Mammary epithelial cell (primary cell): ENCODE measurements at regions of chr10 and their contacts with region 1.

Region 1: DNA sequence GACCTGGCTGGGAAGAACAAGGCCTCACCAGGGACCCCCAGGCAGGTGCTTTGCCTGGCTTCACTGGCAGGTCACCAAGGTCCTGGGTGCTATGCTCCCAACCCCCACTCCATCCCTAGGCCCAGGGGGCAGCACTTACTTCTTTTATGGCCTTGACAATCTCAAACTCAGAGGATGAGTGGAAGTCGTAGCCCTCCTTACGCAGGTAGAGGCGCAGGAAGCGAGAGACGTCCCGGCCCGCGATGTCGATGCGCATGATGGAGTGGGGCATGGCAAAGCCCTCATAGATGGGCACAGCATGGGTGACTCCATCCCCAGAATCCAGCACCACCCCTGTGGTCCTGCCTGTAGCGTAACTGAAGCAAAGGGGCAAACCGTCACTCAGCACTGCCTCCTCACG is 18.5 kb downstream of the ACTR1A start:
- DNase-seq: no peak
- H3K4me3 ChIP-seq: no peak overlapping the region
- H3K27ac ChIP-seq: no peak overlapping the region
- H3K4me1 ChIP-seq: no peaks in the 10 kb centered on the region
- H3K27me3 ChIP-seq: no peaks in the 10 kb centered on the region
- CTCF ChIP-seq: no peak

Region 2: GRCh38 chr10:102310361-102311024 is 173.5 kb before region 1 on chr10:
- CTCF ChIA-PET with region 1: no interaction called
- dilution Hi-C with region 1: no loop called
- in situ Hi-C with region 1: no loop called
- intact Hi-C with region 1: no loop called
- DNase-seq: peak; percentile 32
- H3K4me3 ChIP-seq: no peak overlapping the region
- H3K27ac ChIP-seq: peak overlapping the region; percentile 11
- H3K4me1 ChIP-seq: peaks cover 27% of the 10 kb centered on the region
- H3K27me3 ChIP-seq: no peaks in the 10 kb centered on the region
- CTCF ChIP-seq: no peak

Region 3: GRCh38 chr10:102358712-102359382 is 125.2 kb before region 1 on chr10:
- CTCF ChIA-PET with region 1: no interaction called
- dilution Hi-C with region 1: loop called (anchors 5 kb)
- in situ Hi-C with region 1: no loop called
- intact Hi-C with region 1: no loop called
- DNase-seq: no peak
- H3K4me3 ChIP-seq: no peak overlapping the region
- H3K27ac ChIP-seq: no peak overlapping the region
- H3K4me1 ChIP-seq: no peaks in the 10 kb centered on the region
- H3K27me3 ChIP-seq: no peaks in the 10 kb centered on the region
- CTCF ChIP-seq: no peak

Region 4: DNA sequence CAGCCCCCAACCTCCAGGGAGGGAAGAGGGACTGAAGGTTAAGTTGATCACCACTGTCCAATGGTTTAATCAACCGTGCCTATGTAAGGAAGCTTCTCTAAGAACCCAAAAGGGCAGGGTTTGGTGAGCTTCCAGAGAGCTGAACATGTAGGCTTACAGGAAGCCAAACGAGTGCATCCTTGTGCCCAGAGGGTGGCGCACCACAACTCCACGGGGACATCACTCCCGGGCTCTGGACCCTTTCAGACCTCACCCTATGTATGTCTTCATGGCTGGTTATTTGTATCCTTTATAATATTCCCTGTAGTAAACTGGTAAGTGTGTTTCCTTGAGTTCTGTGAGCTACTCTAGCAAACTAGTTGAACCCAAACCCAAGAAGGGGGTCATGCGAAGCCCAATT is 100.0 kb before region 1 on chr10:
- CTCF ChIA-PET with region 1: no interaction called
- dilution Hi-C with region 1: loop called (anchors 5 kb)
- in situ Hi-C with region 1: no loop called
- intact Hi-C with region 1: no loop called
- DNase-seq: no peak
- H3K4me3 ChIP-seq: no peak overlapping the region
- H3K27ac ChIP-seq: no peak overlapping the region
- H3K4me1 ChIP-seq: no peaks in the 10 kb centered on the region
- H3K27me3 ChIP-seq: no peaks in the 10 kb centered on the region
- CTCF ChIP-seq: peak in 1 of 2 donors; percentile 9

Region 5: DNA sequence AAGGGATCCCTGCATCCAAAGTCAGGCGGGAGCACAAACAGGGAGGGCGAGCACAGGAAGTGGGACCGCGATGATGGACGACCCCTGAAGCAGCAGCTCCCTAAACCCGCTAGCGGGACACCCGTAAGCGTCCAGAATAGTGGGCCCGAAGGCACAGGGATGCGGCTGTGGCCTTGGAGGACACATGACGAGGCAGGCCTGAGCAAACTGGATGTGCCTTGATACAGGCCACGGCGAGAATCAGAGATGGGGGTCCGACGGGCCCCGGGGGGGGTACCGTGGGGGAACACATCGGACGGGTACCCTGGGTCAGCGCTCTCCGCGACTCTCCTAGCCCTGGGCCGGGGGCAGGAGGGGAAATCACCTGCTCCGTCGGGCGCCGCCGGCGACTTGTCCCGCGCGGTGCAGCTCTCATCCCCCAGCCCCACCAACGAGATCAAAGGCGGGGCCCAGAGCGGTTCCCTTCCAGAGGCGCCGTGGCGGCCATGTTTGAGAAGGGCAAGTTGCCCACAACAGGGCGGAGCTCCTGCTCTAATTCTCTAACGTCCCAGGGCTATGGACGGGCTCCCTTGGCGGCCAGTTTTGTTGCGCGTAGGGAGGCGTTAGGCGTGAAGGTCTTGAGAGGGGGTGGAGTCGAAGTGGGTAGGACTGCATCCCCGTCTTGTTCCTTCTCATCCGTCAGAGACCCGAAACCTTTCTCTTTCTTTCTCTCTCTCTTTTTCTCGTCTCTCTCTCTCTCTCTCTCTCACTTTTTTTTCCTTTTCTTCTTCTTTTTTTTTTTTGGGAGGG is 51.7 kb before region 1 on chr10 and contains the start of gene CUEDC2:
- CTCF ChIA-PET with region 1: no interaction called
- dilution Hi-C with region 1: loop called (anchors 5 kb)
- in situ Hi-C with region 1: no loop called
- intact Hi-C with region 1: no loop called
- DNase-seq: peak; percentile 94
- H3K4me3 ChIP-seq: peak within 1 kb of the TSS; percentile 42 to 97 (median 80)
- H3K27ac ChIP-seq: peak within 1 kb of the TSS; percentile 47
- H3K4me1 ChIP-seq: no peaks in the 10 kb centered on the region
- H3K27me3 ChIP-seq: no peaks in the 10 kb centered on the region
- CTCF ChIP-seq: no peak
- total RNA-seq, gene CUEDC2: 32.0 to 49.5 TPM

Region 6: DNA sequence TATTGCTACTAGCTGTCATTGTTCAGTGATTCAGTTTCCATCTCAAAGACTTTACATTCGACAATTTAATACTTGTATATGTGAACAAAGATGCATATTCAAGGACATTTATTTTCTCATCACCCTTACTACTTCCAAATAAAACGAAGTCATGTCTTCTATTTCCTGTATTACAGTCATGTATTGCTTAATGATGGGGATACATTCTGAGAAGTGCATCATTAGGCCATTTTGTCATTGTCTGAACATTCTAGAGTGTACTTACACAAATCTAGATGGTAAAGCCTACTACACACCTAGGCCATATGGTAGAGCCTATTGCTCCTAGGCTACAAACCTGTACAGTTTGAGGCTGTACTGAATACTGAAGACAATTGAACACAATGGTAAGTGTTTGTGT is 39.2 kb before region 1 on chr10:
- CTCF ChIA-PET with region 1: no interaction called
- dilution Hi-C with region 1: no loop called
- in situ Hi-C with region 1: no loop called
- intact Hi-C with region 1: no loop called
- DNase-seq: no peak
- H3K4me3 ChIP-seq: no peak overlapping the region
- H3K27ac ChIP-seq: no peak overlapping the region
- H3K4me1 ChIP-seq: peaks cover 5% of the 10 kb centered on the region
- H3K27me3 ChIP-seq: no peaks in the 10 kb centered on the region
- CTCF ChIP-seq: no peak

Region 7: DNA sequence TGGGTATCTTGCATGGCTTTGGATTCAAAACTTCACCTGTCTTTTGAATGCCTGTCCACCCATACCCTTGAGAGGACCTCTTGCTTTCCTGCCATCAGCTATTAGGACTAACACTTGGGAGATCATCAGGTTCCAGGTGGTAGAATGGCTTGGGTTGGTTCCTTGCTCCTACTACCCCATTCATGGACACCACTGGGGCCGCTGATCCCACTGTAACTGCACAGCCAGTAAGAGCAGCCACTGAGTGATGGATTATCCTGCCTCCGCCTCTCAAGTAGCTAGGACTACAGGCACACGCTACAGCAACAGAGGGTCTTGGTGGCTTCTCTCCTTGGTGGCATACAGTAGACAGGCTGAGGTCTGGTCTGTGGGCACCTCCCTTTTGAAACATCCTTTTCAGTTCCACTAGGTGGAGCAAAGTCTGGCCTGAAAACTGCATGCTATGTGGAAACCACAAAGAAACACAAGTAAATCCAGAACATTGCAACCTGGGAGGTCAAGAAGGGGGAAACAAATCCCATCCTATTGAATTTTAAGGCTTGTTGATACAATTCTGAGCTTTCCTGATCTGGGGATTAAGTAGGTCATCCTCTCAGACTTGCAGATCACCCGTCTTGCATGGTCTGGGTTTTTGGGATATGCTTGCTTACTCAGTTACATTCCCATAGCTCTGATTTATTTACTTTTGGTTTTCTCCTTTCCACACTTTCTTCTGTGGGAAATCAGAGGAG is 269.1 kb after region 1 on chr10:
- CTCF ChIA-PET with region 1: no interaction called
- dilution Hi-C with region 1: no loop called
- in situ Hi-C with region 1: no loop called
- intact Hi-C with region 1: no loop called
- DNase-seq: peak; percentile 37
- H3K4me3 ChIP-seq: no peak overlapping the region
- H3K27ac ChIP-seq: no peak overlapping the region
- H3K4me1 ChIP-seq: no peaks in the 10 kb centered on the region
- H3K27me3 ChIP-seq: no peaks in the 10 kb centered on the region
- CTCF ChIP-seq: peak; percentile 52 to 77